ENCODE measurements at regions of chr13 and their contacts with region 1.

Region 1: GRCh38 chr13:79423801-79424642 is 18.0 kb upstream of the RBM26 start:
- DNase-seq: no peak
- ATAC-seq: peak; percentile 85
- H3K4me3 ChIP-seq: no peak overlapping the region
- H3K27ac ChIP-seq: no peak overlapping the region
- H3K4me1 ChIP-seq: no peaks in the 10 kb centered on the region
- H3K27me3 ChIP-seq: no peaks in the 10 kb centered on the region
- CTCF ChIP-seq: peak; percentile 46 to 71 (median 56); a peak in 5 of 6 replicates
- EP300 ChIP-seq: no peak
- POLR2A ChIP-seq: no peak
- RAD21 ChIP-seq: peak; percentile 90

Region 2: DNA sequence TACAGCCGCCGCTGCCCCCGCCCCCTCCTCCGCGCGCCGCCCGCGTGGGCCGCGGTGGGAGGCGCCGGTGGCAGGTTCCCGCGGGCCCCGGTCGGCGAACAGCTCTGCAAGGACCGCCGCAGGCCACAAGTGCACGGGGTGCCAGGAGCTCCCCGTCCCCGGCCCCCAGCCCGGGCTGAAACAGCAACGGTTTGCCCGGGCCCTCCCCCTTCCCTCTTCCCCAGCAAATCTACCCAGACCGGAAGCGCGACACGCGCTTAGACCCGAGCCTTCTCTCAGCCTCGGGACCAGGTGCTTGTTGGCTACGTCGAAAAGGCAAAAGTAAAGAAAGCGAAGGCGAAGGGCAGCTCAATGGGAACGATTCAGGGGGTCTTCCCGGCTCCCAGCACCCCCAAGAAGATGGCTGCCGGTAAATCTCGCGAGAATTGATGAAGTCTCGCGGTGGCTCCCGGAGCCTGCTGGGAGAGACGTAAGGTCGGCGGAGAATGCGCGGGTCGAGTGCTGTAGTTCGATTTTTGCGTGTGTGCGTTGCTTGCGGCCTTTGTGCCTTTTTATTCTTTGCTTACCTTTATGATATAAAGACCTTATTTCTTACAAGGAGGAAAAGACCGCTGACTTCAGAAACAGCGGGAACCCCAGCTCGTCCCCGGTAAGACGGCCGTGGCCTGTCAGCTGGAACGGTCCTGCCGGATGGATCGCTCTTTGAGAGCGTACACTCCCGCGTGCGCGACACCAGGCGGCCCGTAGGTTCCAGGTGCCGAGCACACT is 18.0 kb before region 1 on chr13 and contains the start of gene RBM26:
- CTCF ChIA-PET with region 1: interaction called, 17 read pairs
- POLR2A ChIA-PET with region 1: interaction called, 3 read pairs
- RAD21 ChIA-PET with region 1: interaction called, 11 read pairs
- SMC1A ChIA-PET with region 1: interaction called, 13 read pairs
- in situ Hi-C with region 1: no loop called
- intact Hi-C with region 1: no loop called
- DNase-seq: peak; percentile 76
- ATAC-seq: peak; percentile 73
- H3K4me3 ChIP-seq: peak within 1 kb of the TSS; percentile 99
- H3K27ac ChIP-seq: peak within 1 kb of the TSS; percentile 99
- H3K4me1 ChIP-seq: peaks cover 2% of the 10 kb centered on the region; the same call in 1 of the 2 replicates
- H3K27me3 ChIP-seq: no peaks in the 10 kb centered on the region
- CTCF ChIP-seq: no peak
- EP300 ChIP-seq: no peak
- POLR2A ChIP-seq: peak; percentile 95
- RAD21 ChIP-seq: no peak
- polyA plus RNA-seq, gene RBM26: 17.6 to 19.2 TPM

Region 3: DNA sequence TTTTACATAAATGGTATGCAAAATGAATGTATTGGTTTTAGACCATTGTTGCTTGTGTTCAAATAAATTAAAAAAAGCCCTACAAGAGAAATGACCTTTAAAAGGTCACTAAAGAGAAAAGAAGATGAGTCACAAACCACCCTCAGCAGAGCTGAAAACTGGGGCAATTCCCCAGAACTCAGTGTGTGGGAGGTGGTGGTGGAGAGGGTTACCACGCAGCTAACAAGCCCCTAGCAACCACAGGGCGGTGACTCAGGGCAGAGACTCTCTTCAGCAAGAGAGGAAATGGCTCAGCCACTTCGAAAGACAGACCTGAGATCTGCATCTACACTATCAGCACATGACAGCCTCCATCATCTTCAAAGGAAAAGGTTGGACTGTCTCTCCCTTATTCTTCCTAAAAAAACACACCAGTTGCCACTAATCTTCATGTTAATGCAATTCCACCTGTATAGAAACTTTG is 27.5 kb after region 1 on chr13:
- CTCF ChIA-PET with region 1: interaction called, 7 read pairs
- POLR2A ChIA-PET with region 1: interaction called, 4 read pairs
- RAD21 ChIA-PET with region 1: interaction called, 19 read pairs
- SMC1A ChIA-PET with region 1: interaction called, 14 read pairs
- in situ Hi-C with region 1: no loop called
- intact Hi-C with region 1: no loop called
- DNase-seq: peak; percentile 71
- ATAC-seq: peak; percentile 100
- H3K4me3 ChIP-seq: no peak overlapping the region
- H3K27ac ChIP-seq: no peak overlapping the region
- H3K4me1 ChIP-seq: peaks cover 10% of the 10 kb centered on the region; the same call in 1 of the 2 replicates
- H3K27me3 ChIP-seq: no peaks in the 10 kb centered on the region
- CTCF ChIP-seq: no peak
- EP300 ChIP-seq: peak in 1 of 2 experiments; percentile 35; a peak in 1 of 4 replicates
- POLR2A ChIP-seq: no peak
- RAD21 ChIP-seq: no peak

Region 4: DNA sequence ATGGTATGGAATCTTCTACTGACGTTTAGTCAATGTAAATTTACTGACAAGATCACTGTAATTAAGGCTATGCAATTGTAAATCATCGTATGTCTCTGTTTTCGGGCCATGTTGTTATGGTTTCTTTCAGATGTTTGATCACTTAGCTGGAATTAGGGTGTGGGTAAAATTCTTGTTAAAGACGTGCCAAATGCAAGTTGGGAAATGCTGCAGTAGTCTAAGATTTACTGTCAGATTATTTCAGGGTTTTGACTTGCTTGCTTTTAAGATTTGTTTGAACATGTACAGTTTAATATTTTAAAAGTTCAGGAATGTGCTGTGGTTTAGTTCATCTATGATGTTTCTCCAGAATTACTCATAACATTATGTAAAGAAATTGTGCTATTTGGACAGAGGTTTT is 67.7 kb after region 1 on chr13:
- CTCF ChIA-PET with region 1: interaction called, 9 read pairs
- POLR2A ChIA-PET with region 1: no interaction called
- RAD21 ChIA-PET with region 1: interaction called, 9 read pairs
- SMC1A ChIA-PET with region 1: interaction called, 11 read pairs
- in situ Hi-C with region 1: no loop called
- intact Hi-C with region 1: no loop called
- DNase-seq: no peak
- ATAC-seq: no peak
- H3K4me3 ChIP-seq: no peak overlapping the region
- H3K27ac ChIP-seq: no peak overlapping the region
- H3K4me1 ChIP-seq: peaks cover 4% of the 10 kb centered on the region
- H3K27me3 ChIP-seq: no peaks in the 10 kb centered on the region
- CTCF ChIP-seq: no peak
- EP300 ChIP-seq: no peak
- POLR2A ChIP-seq: no peak
- RAD21 ChIP-seq: no peak

Region 5: DNA sequence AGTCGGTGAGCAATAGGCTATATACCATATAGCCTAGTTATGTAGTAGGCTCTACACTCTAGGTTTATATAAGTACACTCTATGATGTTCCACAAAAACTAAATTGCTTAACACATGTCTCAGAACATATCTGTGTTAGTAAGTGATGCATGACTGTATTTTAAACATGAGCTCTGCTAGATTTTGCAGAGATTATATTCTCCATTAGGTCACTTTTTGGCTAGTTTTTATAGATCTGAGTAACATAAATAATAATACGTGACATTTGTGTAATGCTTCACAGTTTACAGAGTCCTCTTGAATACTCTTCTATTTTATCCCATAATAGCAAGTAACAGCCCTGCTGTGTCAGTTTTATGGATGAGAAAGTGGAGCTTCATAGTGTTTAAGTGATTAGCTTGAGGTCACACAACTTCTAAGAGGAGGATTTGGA is 104.8 kb after region 1 on chr13:
- CTCF ChIA-PET with region 1: interaction called, 564 read pairs
- POLR2A ChIA-PET with region 1: no interaction called
- RAD21 ChIA-PET with region 1: interaction called, 57 read pairs
- SMC1A ChIA-PET with region 1: interaction called, 45 read pairs
- in situ Hi-C with region 1: no loop called
- intact Hi-C with region 1: no loop called
- DNase-seq: no peak
- ATAC-seq: no peak
- H3K4me3 ChIP-seq: no peak overlapping the region
- H3K27ac ChIP-seq: no peak overlapping the region
- H3K4me1 ChIP-seq: peaks cover 6% of the 10 kb centered on the region; the same call in 1 of the 2 replicates
- H3K27me3 ChIP-seq: no peaks in the 10 kb centered on the region
- CTCF ChIP-seq: no peak
- EP300 ChIP-seq: no peak
- POLR2A ChIP-seq: no peak
- RAD21 ChIP-seq: no peak

Region 6: DNA sequence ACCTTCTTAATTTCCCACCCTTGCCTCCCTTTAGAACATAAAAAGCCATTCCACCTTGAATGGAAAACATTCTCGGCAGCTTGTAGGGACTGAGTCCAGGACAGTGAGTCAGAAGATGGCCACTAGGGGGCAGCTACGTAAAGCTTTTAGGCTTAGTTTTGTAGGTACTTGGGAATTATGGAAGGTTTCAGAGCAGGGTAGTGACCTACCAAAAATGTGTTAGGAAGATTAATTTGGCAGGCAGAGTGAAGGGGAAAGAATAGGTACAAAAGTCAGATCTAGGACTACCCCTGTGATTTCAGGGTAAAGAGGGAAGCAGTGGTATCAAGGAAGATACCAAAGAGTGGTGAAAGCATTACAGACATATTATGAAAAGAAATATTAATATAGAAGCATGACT is 255.3 kb after region 1 on chr13:
- CTCF ChIA-PET with region 1: interaction called, 24 read pairs
- POLR2A ChIA-PET with region 1: no interaction called
- RAD21 ChIA-PET with region 1: interaction called, 24 read pairs
- SMC1A ChIA-PET with region 1: interaction called, 18 read pairs
- in situ Hi-C with region 1: no loop called
- intact Hi-C with region 1: no loop called
- DNase-seq: no peak
- ATAC-seq: peak; percentile 87
- H3K4me3 ChIP-seq: no peak overlapping the region
- H3K27ac ChIP-seq: no peak overlapping the region
- H3K4me1 ChIP-seq: no peaks in the 10 kb centered on the region
- H3K27me3 ChIP-seq: no peaks in the 10 kb centered on the region
- CTCF ChIP-seq: peak; percentile 70 to 90 (median 83)
- EP300 ChIP-seq: no peak
- POLR2A ChIP-seq: no peak
- RAD21 ChIP-seq: peak; percentile 88